Activated naive CD4-positive, alpha-beta T cell treated with anti-CD3 and anti-CD28 coated beads, Interleukin-2, amount 10 ng/mL, durations not matched to agents 7 days and 5 days (primary cell): ENCODE measurements at regions of chr10 and their contacts with region 1.

Region 1: GRCh38 chr10:73096449-73097304 is at the start of gene P4HA1:
- DNase-seq: peak; percentile 99
- H3K4me3 Mint-ChIP-seq: peak within 1 kb of the TSS; percentile 89
- H3K27ac Mint-ChIP-seq: peak within 1 kb of the TSS; percentile 93
- H3K4me1 Mint-ChIP-seq: peaks cover 32% of the 10 kb centered on the region
- H3K27me3 Mint-ChIP-seq: peaks cover 8% of the 10 kb centered on the region

Region 2: GRCh38 chr10:72956001-72956400 is 140.7 kb before region 1 on chr10:
- CTCF ChIA-PET with region 1: no interaction called
- DNase-seq: no peak
- H3K4me3 Mint-ChIP-seq: no peak overlapping the region
- H3K27ac Mint-ChIP-seq: no peak overlapping the region
- H3K4me1 Mint-ChIP-seq: no peaks in the 10 kb centered on the region
- H3K27me3 Mint-ChIP-seq: peaks cover 13% of the 10 kb centered on the region

Region 3: DNA sequence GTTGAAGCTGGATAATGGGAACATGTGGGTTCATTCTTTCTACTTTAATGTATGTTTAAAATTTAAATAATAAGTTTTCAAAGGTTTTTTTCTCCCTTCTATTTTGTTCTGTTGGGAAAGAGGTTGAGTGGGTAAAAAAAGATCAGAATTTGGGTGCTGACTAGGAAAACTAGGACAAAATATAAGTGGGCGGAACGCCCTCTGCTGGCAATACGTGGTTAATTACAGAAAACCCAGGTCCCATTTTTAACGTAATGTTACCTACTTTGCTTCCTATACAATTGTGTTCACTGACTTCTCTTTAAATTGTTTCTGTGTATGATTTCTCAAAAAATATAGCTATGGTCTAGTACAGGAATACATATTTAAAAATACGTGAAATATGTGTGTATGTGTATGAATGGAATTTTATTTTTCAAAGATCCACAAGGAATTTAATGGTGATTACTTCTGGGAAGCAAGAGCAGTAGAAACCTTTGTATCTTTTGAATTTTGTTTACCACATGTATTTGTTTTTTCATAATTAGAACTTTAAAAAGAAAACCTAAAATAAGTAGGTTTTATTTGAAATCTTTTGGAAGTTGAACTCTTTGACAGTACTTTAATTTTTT is 62.5 kb after region 1 on chr10:
- CTCF ChIA-PET with region 1: interaction called, 29 read pairs
- DNase-seq: peak; percentile 75
- H3K4me3 Mint-ChIP-seq: no peak overlapping the region
- H3K27ac Mint-ChIP-seq: no peak overlapping the region
- H3K4me1 Mint-ChIP-seq: peaks cover 35% of the 10 kb centered on the region
- H3K27me3 Mint-ChIP-seq: no peaks in the 10 kb centered on the region